Activated CD4-positive, alpha-beta T cell treated with anti-CD3 and anti-CD28 coated beads for 36 hours (primary cell): ENCODE measurements at regions of chr2 and their contacts with region 1.

Region 1: DNA sequence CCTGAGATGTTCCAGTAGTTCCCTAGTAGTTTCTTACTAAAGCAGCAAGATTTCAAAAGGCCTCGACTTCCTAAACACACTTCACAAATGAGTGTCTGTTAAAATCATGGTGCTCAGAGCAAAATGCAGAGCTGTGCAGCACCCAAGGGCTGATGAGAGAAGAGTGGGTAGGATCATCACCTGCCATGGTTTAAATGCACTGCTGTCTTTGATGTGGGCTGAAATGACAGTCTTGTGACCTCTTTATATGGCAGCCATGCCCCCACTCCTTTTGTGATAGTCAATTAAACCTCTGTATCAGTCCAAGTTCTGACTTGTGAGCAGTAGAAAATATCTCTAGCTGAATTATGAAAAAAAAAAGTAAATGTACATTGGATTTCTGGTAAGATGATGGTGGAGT is 107.1 kb downstream of the TFCP2L1 start:
- DNase-seq: no peak
- ATAC-seq: no peak
- H3K4me3 Mint-ChIP-seq: no peak overlapping the region
- H3K27ac Mint-ChIP-seq: no peak overlapping the region
- H3K4me1 Mint-ChIP-seq: no peaks in the 10 kb centered on the region
- H3K27me3 Mint-ChIP-seq: peaks cover 9% of the 10 kb centered on the region

Region 2: DNA sequence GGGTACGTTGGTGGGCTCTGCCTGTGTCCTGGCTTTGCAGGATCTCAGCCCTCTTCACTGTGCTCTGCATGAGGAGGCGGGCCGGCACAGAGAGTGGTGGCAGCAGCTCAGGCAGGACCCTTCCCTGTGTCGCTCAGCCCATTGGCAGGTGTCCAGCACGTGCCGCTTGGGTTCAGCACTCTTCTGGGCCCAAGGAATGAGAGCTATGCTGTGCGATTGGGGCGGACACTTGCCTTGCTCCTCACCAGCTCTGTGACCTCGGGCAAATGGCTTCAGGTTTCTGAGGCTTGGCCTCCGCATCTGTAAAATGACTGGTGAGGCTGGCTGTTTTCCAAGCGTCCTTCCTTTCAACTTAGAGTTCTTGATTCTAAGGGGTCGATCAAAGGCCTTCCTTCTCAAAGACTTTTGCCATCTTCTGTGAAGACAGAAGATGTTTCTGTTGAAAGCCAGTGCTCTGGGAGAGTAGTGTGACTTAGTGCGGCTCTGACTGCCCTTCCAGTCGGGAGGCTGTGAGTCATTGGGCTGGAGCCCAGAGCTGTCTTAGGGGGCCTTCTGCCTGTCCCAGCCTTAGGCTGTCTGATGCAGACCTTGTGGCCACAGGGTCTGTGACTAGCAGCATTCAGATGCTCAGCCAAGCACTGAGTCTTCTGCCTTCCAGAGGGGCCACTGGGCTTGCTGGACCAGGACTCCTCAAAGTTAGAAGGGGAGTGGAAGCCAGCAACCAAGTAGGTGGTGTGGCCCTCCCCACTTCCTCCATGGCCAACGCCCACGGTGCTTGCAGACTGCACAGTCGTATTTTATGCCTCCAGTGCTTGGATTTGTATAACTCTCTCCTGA is 406.6 kb before region 1 on chr2:
- CTCF ChIA-PET with region 1: no interaction called
- POLR2A ChIA-PET with region 1: no interaction called
- intact Hi-C with region 1: no loop called
- DNase-seq: no peak
- ATAC-seq: no peak
- H3K4me3 Mint-ChIP-seq: no peak overlapping the region
- H3K27ac Mint-ChIP-seq: no peak overlapping the region
- H3K4me1 Mint-ChIP-seq: no peaks in the 10 kb centered on the region
- H3K27me3 Mint-ChIP-seq: no peaks in the 10 kb centered on the region

Region 3: GRCh38 chr2:121167411-121167810 is 10.5 kb before region 1 on chr2:
- CTCF ChIA-PET with region 1: no interaction called
- POLR2A ChIA-PET with region 1: no interaction called
- intact Hi-C with region 1: no loop called
- DNase-seq: no peak
- ATAC-seq: no peak
- H3K4me3 Mint-ChIP-seq: no peak overlapping the region
- H3K27ac Mint-ChIP-seq: no peak overlapping the region
- H3K4me1 Mint-ChIP-seq: no peaks in the 10 kb centered on the region
- H3K27me3 Mint-ChIP-seq: peaks cover 8% of the 10 kb centered on the region

Region 4: GRCh38 chr2:121248766-121249343 is 71.0 kb after region 1 on chr2:
- CTCF ChIA-PET with region 1: no interaction called
- POLR2A ChIA-PET with region 1: no interaction called
- intact Hi-C with region 1: loop called in 1 of 2 experiments (anchors 2 kb)
- DNase-seq: no peak
- ATAC-seq: no peak
- H3K4me3 Mint-ChIP-seq: no peak overlapping the region
- H3K27ac Mint-ChIP-seq: no peak overlapping the region
- H3K4me1 Mint-ChIP-seq: no peaks in the 10 kb centered on the region
- H3K27me3 Mint-ChIP-seq: no peaks in the 10 kb centered on the region